B cell (primary cell): ENCODE measurements at regions of chr2 and their contacts with region 1.

Region 1: GRCh38 chr2:217785544-217786045 is 217.2 kb downstream of the TNS1 start:
- DNase-seq: peak; percentile 80
- ATAC-seq: peak; percentile 62
- H3K4me3 ChIP-seq: no peak overlapping the region
- H3K4me3 Mint-ChIP-seq: no peak overlapping the region
- H3K27ac ChIP-seq: no peak overlapping the region
- H3K27ac Mint-ChIP-seq: no peak overlapping the region
- H3K4me1 ChIP-seq: peaks cover 6 to 17% of the 10 kb centered on the region in 2 donors
- H3K4me1 Mint-ChIP-seq: peaks cover 16% of the 10 kb centered on the region
- H3K27me3 ChIP-seq: no peaks in the 10 kb centered on the region
- H3K27me3 Mint-ChIP-seq: no peaks in the 10 kb centered on the region
- CTCF ChIP-seq: peak; percentile 96

Region 2: DNA sequence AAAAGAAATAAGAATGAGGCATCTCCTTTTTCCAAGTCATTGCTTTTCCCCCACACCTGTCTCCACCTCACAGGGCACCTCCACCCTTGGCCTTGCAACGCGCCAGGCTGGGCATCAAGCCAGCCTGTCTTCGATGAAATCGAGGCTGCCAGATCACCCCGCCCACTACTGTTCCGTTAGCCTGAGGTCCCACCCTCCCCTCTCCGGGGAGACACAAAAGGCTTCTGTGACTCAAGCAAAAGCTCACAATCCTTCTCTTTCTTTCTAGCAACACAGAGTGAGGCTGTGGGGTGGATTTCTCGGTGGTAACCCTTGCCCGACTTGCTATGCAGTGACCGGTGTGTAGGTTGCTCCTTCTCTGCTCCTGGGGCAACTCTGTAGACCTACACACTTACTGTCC is 935.6 kb before region 1 on chr2:
- CTCF ChIA-PET with region 1: no interaction called
- POLR2A ChIA-PET with region 1: no interaction called
- intact Hi-C with region 1: no loop called
- DNase-seq: no peak
- ATAC-seq: no peak
- H3K4me3 ChIP-seq: no peak overlapping the region
- H3K4me3 Mint-ChIP-seq: no peak overlapping the region
- H3K27ac ChIP-seq: no peak overlapping the region
- H3K27ac Mint-ChIP-seq: no peak overlapping the region
- H3K4me1 ChIP-seq: no peaks in the 10 kb centered on the region
- H3K4me1 Mint-ChIP-seq: no peaks in the 10 kb centered on the region
- H3K27me3 ChIP-seq: no peaks in the 10 kb centered on the region
- H3K27me3 Mint-ChIP-seq: peaks cover 19% of the 10 kb centered on the region
- CTCF ChIP-seq: no peak

Region 3: GRCh38 chr2:217804786-217805667 is 19.4 kb after region 1 on chr2:
- CTCF ChIA-PET with region 1: interaction called, 32 read pairs
- POLR2A ChIA-PET with region 1: no interaction called
- intact Hi-C with region 1: no loop called
- DNase-seq: no peak
- ATAC-seq: no peak
- H3K4me3 ChIP-seq: no peak overlapping the region
- H3K4me3 Mint-ChIP-seq: no peak overlapping the region
- H3K27ac ChIP-seq: no peak overlapping the region
- H3K27ac Mint-ChIP-seq: no peak overlapping the region
- H3K4me1 ChIP-seq: no peaks in the 10 kb centered on the region
- H3K4me1 Mint-ChIP-seq: peaks cover under 1% of the 10 kb centered on the region
- H3K27me3 ChIP-seq: peaks cover 0 to 2% (median 0%) of the 10 kb centered on the region in 4 experiments
- H3K27me3 Mint-ChIP-seq: peaks cover 6% of the 10 kb centered on the region
- CTCF ChIP-seq: no peak

Region 4: GRCh38 chr2:217864963-217865772 is 79.6 kb after region 1 on chr2:
- CTCF ChIA-PET with region 1: interaction called, 5 read pairs
- POLR2A ChIA-PET with region 1: no interaction called
- intact Hi-C with region 1: loop called (anchors 5 kb)
- DNase-seq: peak; percentile 84
- ATAC-seq: peak; percentile 91
- H3K4me3 ChIP-seq: peak overlapping the region in 1 of 5 experiments; percentile 9
- H3K4me3 Mint-ChIP-seq: peak overlapping the region; percentile 64
- H3K27ac ChIP-seq: peak overlapping the region; percentile 63 to 77
- H3K27ac Mint-ChIP-seq: peak overlapping the region; percentile 88
- H3K4me1 ChIP-seq: peaks cover 42 to 45% of the 10 kb centered on the region in 2 donors
- H3K4me1 Mint-ChIP-seq: peaks cover 62% of the 10 kb centered on the region
- H3K27me3 ChIP-seq: no peaks in the 10 kb centered on the region
- H3K27me3 Mint-ChIP-seq: peaks cover 2% of the 10 kb centered on the region
- CTCF ChIP-seq: no peak

Region 5: GRCh38 chr2:217988014-217988839 is 202.6 kb after region 1 on chr2:
- CTCF ChIA-PET with region 1: interaction called, 76 read pairs
- POLR2A ChIA-PET with region 1: no interaction called
- intact Hi-C with region 1: no loop called
- DNase-seq: peak; percentile 73
- ATAC-seq: peak; percentile 67
- H3K4me3 ChIP-seq: no peak overlapping the region
- H3K4me3 Mint-ChIP-seq: no peak overlapping the region
- H3K27ac ChIP-seq: no peak overlapping the region
- H3K27ac Mint-ChIP-seq: no peak overlapping the region
- H3K4me1 ChIP-seq: no peaks in the 10 kb centered on the region
- H3K4me1 Mint-ChIP-seq: no peaks in the 10 kb centered on the region
- H3K27me3 ChIP-seq: no peaks in the 10 kb centered on the region
- H3K27me3 Mint-ChIP-seq: peaks cover 18% of the 10 kb centered on the region
- CTCF ChIP-seq: peak; percentile 85

Region 6: DNA sequence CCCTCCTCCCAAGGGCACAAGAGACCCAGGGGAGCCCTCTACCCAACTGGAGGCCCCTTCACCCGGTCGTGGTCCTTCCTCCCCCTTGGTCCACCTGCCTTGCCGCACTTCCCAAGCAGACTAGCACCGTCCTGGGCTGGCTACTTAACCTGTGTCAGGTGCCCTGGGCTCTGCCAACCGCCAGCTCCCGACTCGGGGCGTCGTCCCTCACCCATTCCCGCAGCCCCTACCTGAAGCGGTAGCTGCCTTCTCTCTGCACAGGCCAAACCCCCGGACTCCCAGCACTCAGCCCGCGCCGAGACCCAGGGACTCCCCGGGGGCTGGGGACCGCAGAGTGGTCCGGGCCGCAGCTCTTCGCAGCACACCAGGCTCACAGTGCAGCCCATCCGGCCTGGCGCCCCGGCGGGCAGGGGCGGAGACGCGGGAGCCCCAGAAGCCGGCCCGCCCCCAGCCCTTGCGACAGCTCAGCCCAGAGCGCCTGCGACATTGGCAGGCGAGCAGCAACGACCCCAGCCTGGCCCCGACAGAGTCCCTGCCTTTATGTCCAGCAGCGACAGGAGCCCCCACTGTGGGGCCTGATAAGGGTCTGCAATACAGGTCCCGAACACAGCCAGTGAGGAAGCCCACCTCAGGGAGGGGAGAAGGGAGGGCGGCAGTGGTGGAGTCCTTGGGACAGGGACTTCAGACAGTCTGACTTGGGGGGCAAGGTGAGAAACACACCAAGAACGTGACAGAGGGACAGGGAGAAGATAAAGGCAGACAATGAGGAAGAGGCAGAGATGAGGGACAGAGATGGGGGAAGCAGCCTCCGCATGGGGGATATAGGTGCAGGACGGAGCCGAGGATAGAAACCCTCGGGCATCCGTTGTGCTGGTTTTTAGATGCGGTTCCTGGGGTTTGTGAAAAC is 248.2 kb after region 1 on chr2:
- CTCF ChIA-PET with region 1: interaction called, 74 read pairs
- POLR2A ChIA-PET with region 1: no interaction called
- intact Hi-C with region 1: no loop called
- DNase-seq: no peak
- ATAC-seq: no peak
- H3K4me3 ChIP-seq: peak overlapping the region in 3 of 5 experiments; percentile 22 to 50 (median 46)
- H3K4me3 Mint-ChIP-seq: peak overlapping the region; percentile 81
- H3K27ac ChIP-seq: no peak overlapping the region
- H3K27ac Mint-ChIP-seq: peak overlapping the region; percentile 22
- H3K4me1 ChIP-seq: peaks cover 6 to 16% of the 10 kb centered on the region in 2 donors
- H3K4me1 Mint-ChIP-seq: peaks cover 9% of the 10 kb centered on the region
- H3K27me3 ChIP-seq: peaks cover 0 to 7% (median 2%) of the 10 kb centered on the region in 4 experiments
- H3K27me3 Mint-ChIP-seq: peaks cover 14% of the 10 kb centered on the region
- CTCF ChIP-seq: no peak